HCT116 (cell line): ENCODE measurements at regions of chr2 and their contacts with region 1.

Region 1: GRCh38 chr2:110885256-110885655 is 152.9 kb downstream of the ACOXL start:
- DNase-seq: no peak
- ATAC-seq: no peak
- H3K4me3 ChIP-seq: no peak overlapping the region
- H3K27ac ChIP-seq: no peak overlapping the region
- H3K4me1 ChIP-seq: no peaks in the 10 kb centered on the region
- H3K27me3 ChIP-seq: no peaks in the 10 kb centered on the region
- CTCF ChIP-seq: no peak
- POLR2A ChIP-seq: no peak
- RAD21 ChIP-seq: no peak

Region 2: DNA sequence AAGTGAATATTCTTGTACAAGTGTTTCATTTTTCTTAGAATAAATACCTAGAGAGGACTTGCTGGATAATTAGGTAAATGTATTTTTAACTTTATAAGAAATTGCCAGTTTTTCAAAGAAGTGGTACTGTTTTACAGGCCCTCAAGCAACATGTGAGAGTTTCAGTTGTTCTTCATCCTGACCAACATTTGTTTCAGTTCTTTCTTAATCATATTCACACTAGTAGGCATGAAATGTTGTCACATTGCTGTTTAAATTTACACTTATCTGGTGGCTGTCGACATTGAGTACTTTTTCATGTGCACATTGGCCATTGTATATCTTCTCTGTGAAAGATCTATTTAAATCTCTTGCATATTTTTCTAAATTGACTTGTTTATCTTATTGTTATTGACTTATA is 25.2 kb after region 1 on chr2:
- CTCF ChIA-PET with region 1: no interaction called
- POLR2A ChIA-PET with region 1: no interaction called
- RAD21 ChIA-PET with region 1: no interaction called
- intact Hi-C with region 1: loop called (anchors 1 kb)
- DNase-seq: no peak
- ATAC-seq: no peak
- H3K4me3 ChIP-seq: no peak overlapping the region
- H3K27ac ChIP-seq: no peak overlapping the region
- H3K4me1 ChIP-seq: no peaks in the 10 kb centered on the region
- H3K27me3 ChIP-seq: no peaks in the 10 kb centered on the region
- CTCF ChIP-seq: no peak
- POLR2A ChIP-seq: no peak
- RAD21 ChIP-seq: no peak